ENCODE measurements at regions of chr15 and their contacts with region 1.

Region 1: GRCh38 chr15:82999905-83000671 is 11.4 kb downstream of the C15orf40 start:
- DNase-seq: peak; percentile 73 to 87 (median 87)
- H3K4me3 ChIP-seq: peak overlapping the region; percentile 3 to 92 (median 61)
- H3K27ac ChIP-seq: no peak overlapping the region
- H3K4me1 ChIP-seq: peaks cover 0 to 6% (median 2%) of the 10 kb centered on the region in 4 experiments
- H3K27me3 ChIP-seq: no peaks in the 10 kb centered on the region

Region 2: DNA sequence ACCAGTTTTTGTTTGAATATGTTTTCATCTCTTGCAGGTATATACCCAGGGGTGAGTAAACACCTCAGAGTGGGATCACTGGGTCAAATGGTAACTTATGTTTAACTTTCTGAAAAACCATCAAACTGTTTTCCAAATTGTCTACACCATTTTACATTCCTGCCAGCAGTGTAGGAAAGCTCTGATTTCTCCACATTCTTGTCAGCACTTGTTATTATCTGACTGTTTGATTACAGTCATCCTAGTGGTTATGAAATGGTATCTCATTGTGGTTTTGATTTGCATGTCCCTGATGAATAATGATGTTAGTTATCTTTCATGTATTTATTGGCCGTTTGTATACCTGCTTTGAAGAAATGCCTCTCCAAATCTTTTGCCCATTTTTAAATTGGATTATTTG is 208.0 kb before region 1 on chr15:
- CTCF ChIA-PET with region 1: no interaction called
- POLR2A ChIA-PET with region 1: no interaction called
- DNase-seq: no peak
- H3K4me3 ChIP-seq: no peak overlapping the region
- H3K27ac ChIP-seq: no peak overlapping the region
- H3K4me1 ChIP-seq: no peaks in the 10 kb centered on the region
- H3K27me3 ChIP-seq: no peaks in the 10 kb centered on the region

Region 3: GRCh38 chr15:82832601-82833361 is 167.3 kb before region 1 on chr15:
- CTCF ChIA-PET with region 1: interaction called, 16 read pairs
- POLR2A ChIA-PET with region 1: no interaction called
- DNase-seq: peak; percentile 66 to 93 (median 89)
- H3K4me3 ChIP-seq: peak overlapping the region in 3 of 7 experiments; percentile 1 to 41 (median 12)
- H3K27ac ChIP-seq: peak overlapping the region; percentile 76 to 92
- H3K4me1 ChIP-seq: peaks cover 7 to 26% (median 23%) of the 10 kb centered on the region in 4 experiments
- H3K27me3 ChIP-seq: no peaks in the 10 kb centered on the region

Region 4: GRCh38 chr15:82849556-82850512 is 150.3 kb before region 1 on chr15:
- CTCF ChIA-PET with region 1: interaction called, 71 read pairs
- POLR2A ChIA-PET with region 1: interaction called, 4 read pairs
- DNase-seq: peak; percentile 95 to 98 (median 98)
- H3K4me3 ChIP-seq: peak overlapping the region in 3 of 7 experiments; percentile 12 to 61 (median 37)
- H3K27ac ChIP-seq: peak overlapping the region in 1 of 2 experiments; percentile 37
- H3K4me1 ChIP-seq: peaks cover 8 to 49% (median 38%) of the 10 kb centered on the region in 4 experiments
- H3K27me3 ChIP-seq: no peaks in the 10 kb centered on the region

Region 5: DNA sequence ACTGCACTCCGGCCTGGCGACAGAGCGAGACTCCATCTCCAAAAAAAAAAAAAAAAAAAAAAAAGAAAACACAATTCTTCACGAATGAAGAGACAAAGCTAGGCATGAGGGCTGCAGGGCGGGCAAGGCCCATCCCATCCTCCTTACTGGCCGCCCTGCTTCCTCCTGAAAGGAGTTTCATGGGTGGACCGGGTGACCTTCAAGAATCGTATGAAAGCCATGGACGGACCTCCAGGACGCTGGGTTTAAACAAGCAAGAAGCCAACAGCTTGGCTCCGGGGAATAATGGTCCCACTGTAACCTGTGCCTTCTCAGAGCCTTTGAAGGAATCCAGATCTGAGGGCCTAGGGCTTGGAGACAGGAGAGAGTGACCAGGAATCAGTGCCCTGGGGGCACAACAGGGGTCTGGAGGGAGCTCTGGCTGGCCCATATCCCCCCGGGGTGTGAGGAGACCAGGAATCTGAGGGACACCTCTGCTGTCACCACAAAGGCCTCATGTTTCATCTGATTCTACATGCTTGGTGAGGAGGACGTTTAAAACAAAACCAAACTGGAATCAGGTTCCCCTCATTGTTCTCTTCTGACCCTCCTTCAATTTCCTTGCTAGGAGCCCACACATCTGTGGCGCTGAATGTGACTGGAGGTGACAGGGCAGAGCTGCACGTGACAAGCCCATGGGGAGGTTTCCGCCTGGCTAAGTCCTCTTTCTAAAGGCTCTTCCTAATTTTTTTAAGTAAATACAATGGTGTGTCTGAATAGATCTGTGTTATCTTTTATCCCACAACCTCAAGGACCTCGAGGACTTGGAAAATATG is 144.6 kb before region 1 on chr15:
- CTCF ChIA-PET with region 1: interaction called, 71 read pairs
- POLR2A ChIA-PET with region 1: no interaction called
- DNase-seq: peak; percentile 45 to 74 (median 69)
- H3K4me3 ChIP-seq: peak overlapping the region in 4 of 7 experiments; percentile 15 to 63 (median 27)
- H3K27ac ChIP-seq: peak overlapping the region; percentile 29 to 74
- H3K4me1 ChIP-seq: peaks cover 4 to 32% (median 28%) of the 10 kb centered on the region in 4 experiments
- H3K27me3 ChIP-seq: no peaks in the 10 kb centered on the region

Region 6: DNA sequence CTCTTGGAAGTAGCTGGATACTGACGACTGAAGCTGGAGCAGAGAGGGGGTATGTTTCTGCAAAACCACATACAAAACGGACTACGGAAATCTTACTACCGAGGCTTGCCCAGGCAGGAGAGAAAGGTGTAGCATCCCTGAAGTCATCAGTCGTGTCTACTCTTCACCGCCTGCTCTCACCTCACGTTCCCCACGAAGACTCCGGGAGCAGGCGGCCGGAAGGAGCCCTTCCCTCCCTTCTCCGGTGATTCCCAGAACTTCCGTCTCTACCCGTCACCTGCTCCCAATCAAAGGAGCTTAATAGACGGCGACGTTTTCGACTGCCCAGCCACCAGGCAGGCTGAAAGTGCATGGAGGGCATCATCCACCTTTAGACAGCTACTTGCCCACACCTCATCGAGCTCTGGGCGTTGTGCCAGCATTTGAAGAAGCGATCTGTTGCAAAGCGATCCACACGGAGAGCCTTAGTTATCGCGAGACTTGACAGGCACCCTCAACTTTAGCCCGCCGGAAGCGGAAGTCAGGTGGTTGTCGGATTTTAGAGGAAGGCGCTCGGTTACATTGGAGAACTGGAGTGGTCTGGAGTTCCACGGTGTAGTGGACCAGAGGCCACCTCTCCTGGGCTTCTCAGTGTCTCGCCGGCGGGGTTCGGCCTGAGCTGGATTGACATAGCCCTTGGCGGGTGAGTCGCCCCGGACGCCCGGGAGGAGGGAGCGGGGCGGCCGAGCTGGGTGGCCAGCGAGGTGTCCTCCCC is 14.2 kb before region 1 on chr15 and contains the start of gene RAMAC:
- CTCF ChIA-PET with region 1: interaction called, 27 read pairs
- POLR2A ChIA-PET with region 1: no interaction called
- DNase-seq: peak; percentile 98 to 99 (median 99)
- H3K4me3 ChIP-seq: peak within 1 kb of the TSS; percentile 76 to 98 (median 84)
- H3K27ac ChIP-seq: peak within 1 kb of the TSS; percentile 77 to 89
- H3K4me1 ChIP-seq: peaks cover 12 to 19% (median 16%) of the 10 kb centered on the region in 4 experiments
- H3K27me3 ChIP-seq: no peaks in the 10 kb centered on the region

Region 7: DNA sequence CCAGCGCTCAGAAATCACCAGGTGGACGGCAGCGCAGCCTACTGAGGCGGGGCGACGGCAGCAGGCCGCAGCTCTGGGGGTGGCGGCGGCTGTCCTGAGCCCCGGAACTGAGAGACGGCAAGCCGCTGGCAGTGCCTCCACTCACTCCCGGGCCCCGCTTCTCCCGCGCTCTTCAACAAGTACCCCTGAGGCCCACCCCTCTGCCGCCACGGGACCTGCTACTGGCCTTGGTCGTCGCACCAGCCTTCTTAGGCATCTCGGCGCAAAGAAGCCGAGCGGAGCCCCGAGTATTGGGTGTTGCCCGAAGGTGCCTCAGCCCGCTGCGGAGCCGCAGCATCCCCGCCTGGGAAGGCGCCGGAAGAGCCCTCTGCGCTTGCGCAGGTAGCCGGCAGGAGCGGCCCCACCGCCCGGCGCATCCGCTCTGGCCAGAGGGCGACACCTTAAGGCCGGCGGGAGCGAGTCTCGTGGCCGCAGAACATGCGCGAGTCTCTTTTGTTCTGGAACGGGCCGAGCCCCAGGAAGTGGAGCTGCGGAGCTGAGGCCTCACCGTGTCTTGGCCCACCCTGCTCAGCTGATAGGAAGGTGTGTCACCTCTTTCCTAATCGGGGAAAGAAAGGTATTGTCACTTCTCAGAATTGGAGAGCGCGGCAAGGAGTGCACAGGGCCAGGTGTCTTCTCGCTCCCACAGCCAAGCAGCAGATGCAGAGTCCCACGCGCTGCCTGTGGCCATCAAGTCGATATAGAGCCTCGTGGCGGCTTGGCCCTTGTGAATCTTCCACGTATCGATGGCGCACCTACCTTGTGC is 11.4 kb after region 1 on chr15 and contains the start of gene C15orf40:
- CTCF ChIA-PET with region 1: interaction called, 37 read pairs
- POLR2A ChIA-PET with region 1: no interaction called
- DNase-seq: peak; percentile 81 to 87 (median 83)
- H3K4me3 ChIP-seq: peak within 1 kb of the TSS; percentile 69 to 94 (median 90)
- H3K27ac ChIP-seq: peak within 1 kb of the TSS; percentile 61 to 77
- H3K4me1 ChIP-seq: peaks cover 18 to 37% (median 24%) of the 10 kb centered on the region in 4 experiments
- H3K27me3 ChIP-seq: no peaks in the 10 kb centered on the region

Region 8: GRCh38 chr15:83225449-83225848 is 225.4 kb after region 1 on chr15:
- CTCF ChIA-PET with region 1: no interaction called
- POLR2A ChIA-PET with region 1: no interaction called
- DNase-seq: no peak
- H3K4me3 ChIP-seq: no peak overlapping the region
- H3K27ac ChIP-seq: no peak overlapping the region
- H3K4me1 ChIP-seq: no peaks in the 10 kb centered on the region
- H3K27me3 ChIP-seq: no peaks in the 10 kb centered on the region

Measured in common myeloid progenitor, CD34-positive (primary cell).